ENCODE measurements at regions of chr14 and their contacts with region 1.

Region 1: DNA sequence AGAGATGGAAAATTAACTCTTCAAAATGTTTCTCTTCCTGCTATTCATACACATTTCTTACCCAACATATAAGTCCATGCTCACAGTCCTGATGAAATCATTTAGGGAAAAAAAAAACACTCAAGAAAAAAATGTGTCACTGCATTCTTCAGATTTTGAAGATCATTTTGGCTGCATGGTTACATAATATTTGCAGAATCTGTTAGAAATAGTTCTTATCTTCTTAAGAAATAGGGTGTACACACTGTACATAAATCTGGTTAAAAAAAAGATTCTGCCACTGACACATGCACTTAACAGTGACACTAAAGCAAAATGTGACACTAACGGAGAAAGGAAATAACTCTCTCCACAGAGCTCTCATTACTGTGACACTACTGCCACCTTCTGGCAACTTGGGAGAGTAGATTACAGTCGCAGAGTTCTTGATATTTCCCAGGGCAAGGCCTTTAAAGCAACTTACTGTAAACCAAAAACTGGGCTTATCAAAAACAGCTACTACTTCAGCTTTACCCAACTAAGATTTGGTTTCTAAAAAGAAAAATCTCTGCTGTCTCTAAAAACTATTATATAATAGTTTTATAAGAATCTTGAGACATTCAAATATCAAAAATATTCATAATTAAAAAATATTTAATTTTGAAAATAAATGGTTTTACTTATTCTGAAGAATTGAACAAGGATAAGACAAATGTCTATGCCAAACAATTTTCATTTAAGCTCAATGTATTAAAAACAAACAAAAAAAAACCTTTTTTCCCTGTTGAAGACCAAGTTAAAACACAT is 65.0 kb downstream of the SETD3 start:
- DNase-seq: peak; percentile 48
- H3K4me3 ChIP-seq: no peak overlapping the region
- H3K27ac ChIP-seq: no peak overlapping the region
- H3K27me3 ChIP-seq: no peaks in the 10 kb centered on the region
- CTCF ChIP-seq: peak; percentile 83

Region 2: GRCh38 chr14:99320105-99320572 is 95.5 kb before region 1 on chr14:
- CTCF ChIA-PET with region 1: interaction called, 99 read pairs
- POLR2A ChIA-PET with region 1: no interaction called
- DNase-seq: no peak
- H3K4me3 ChIP-seq: no peak overlapping the region
- H3K27ac ChIP-seq: no peak overlapping the region
- H3K27me3 ChIP-seq: no peaks in the 10 kb centered on the region
- CTCF ChIP-seq: peak; percentile 76

Region 3: GRCh38 chr14:99393047-99393655 is 22.5 kb before region 1 on chr14:
- CTCF ChIA-PET with region 1: interaction called, 305 read pairs
- POLR2A ChIA-PET with region 1: no interaction called
- DNase-seq: no peak
- H3K4me3 ChIP-seq: no peak overlapping the region
- H3K27ac ChIP-seq: no peak overlapping the region
- H3K27me3 ChIP-seq: no peaks in the 10 kb centered on the region
- CTCF ChIP-seq: peak; percentile 80

Region 4: DNA sequence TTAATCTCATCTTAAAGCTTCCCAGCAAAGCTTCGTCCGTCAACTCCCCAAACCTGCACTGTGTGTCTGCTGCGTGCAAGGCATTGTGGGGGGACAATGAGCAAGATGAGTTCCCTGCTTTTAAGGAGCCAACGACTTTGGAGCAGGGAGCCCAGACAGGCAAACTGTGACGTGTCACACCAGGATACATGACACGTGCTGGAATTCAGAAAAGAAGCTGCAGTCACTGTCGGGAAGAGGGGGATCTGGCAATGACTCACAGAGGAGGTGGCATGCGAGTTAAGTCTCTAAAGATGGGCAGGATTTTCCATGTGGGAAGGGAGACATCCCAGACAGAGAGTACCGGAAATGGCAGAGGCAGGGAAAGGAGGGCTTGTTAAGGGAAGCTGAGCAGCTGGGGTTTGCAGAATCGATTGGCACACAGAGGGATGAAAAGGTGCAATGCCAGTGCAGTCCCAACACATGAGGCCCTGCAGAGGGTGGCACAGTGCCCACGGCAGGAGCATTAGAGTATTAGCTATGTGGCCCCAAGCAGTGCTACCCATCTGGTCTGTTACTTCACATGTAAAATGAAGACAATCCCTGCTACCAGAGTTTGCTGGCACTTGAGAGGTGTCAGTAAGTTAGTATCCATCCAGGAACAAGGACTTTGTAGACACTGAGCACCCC is 12.1 kb after region 1 on chr14:
- CTCF ChIA-PET with region 1: interaction called, 43 read pairs
- POLR2A ChIA-PET with region 1: no interaction called
- DNase-seq: no peak
- H3K4me3 ChIP-seq: no peak overlapping the region
- H3K27ac ChIP-seq: no peak overlapping the region
- H3K27me3 ChIP-seq: no peaks in the 10 kb centered on the region
- CTCF ChIP-seq: no peak

Region 5: GRCh38 chr14:99968191-99968920 is 552.7 kb after region 1 on chr14:
- CTCF ChIA-PET with region 1: no interaction called
- POLR2A ChIA-PET with region 1: no interaction called
- DNase-seq: peak; percentile 77
- H3K4me3 ChIP-seq: no peak overlapping the region
- H3K27ac ChIP-seq: peak overlapping the region; percentile 53
- H3K27me3 ChIP-seq: no peaks in the 10 kb centered on the region
- CTCF ChIP-seq: no peak